GM13977 (cell line): ENCODE measurements at regions of chr5 and their contacts with region 1.

Region 1: DNA sequence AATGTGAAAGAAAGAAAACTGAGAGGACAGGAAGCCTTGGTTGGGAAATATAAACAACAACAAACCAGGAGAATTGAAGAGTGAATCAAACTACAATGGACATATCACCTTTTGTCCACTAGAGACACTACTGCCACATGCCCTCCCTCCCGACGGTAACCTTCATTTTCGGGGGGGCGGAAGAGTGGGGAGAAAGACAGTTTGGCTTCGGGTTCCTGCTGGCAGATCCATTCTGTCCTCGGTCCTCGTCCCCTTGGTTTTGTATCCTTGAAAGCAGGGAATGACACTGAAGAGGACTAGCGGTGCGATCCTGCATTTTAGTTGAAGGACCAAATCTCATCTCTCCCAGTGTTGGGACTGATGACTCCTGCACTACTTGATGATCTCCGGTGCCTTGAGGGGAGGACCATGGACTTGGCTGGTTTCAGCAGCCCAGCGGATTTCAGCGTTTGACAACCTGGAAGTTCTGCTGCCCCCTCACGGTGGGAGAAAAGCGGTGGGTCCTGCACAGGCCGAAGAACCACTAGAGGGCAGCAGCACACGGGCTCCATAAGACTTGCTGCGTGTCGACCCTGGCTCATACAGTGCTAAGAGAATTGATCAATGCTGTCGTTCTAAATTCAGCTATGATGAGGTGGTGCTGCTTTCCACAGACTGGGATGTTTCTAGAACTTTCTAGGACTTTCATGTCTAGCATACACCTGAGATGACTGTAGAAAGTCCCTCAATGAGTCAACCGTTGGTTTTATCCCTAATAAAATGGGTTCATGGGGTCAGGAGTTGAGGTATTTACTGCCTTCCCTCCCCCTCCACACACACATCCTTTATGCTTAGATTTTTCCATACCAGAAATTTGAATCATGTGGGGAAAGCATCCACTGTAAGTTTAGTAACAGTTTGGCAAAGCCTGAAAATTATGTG is 15.1 kb upstream of the ZNF131 start:
- DNase-seq: peak; percentile 82
- CTCF ChIP-seq: peak; percentile 100

Region 2: DNA sequence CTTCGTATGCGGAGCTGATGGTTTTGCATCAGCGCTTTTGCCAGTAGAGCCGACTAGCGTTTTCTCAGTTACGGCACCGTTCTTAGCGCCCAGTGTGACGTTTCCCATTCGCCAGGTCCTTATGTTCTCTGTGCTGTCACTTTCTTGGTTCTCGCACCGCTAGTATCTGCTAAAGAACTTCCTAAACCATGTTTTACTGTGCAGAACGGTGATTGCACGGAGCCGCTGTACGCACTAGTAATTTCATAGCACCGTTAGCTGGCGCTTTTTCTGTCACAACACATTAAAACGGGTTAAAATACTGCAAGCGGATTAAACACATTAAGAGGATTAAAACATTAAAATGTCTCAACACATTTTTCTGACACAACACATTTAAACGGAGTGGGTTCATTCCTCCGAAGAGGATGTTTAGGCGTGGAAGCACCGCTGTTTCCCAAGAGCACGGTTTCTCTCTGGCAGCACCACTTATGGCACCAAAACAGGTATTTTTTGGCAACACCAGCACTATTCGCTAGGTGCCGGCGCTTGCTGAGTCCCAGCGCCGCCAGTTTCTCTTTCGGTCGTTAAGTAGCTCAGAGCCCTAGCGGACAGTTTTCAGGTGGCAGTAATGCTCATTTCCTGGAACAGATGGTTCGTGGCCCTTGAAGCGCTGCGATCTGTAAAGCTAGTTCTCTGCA is 85.9 kb before region 1 on chr5:
- in situ Hi-C with region 1: no loop called
- DNase-seq: peak; percentile 66
- CTCF ChIP-seq: peak; percentile 36

Region 3: GRCh38 chr5:43389679-43390329 is 284.2 kb after region 1 on chr5:
- in situ Hi-C with region 1: loop called (anchors 25 kb)
- DNase-seq: peak; percentile 74
- CTCF ChIP-seq: peak; percentile 68